ENCODE measurements at regions of chr17 and their contacts with region 1.

Region 1: GRCh38 chr17:36148559-36149295 is 27.7 kb downstream of the TBC1D3B start:
- DNase-seq: peak; percentile 81
- H3K4me3 Mint-ChIP-seq: no peak overlapping the region
- H3K27ac Mint-ChIP-seq: no peak overlapping the region
- H3K4me1 Mint-ChIP-seq: peaks cover 23% of the 10 kb centered on the region
- H3K27me3 Mint-ChIP-seq: peaks cover 40% of the 10 kb centered on the region

Region 2: DNA sequence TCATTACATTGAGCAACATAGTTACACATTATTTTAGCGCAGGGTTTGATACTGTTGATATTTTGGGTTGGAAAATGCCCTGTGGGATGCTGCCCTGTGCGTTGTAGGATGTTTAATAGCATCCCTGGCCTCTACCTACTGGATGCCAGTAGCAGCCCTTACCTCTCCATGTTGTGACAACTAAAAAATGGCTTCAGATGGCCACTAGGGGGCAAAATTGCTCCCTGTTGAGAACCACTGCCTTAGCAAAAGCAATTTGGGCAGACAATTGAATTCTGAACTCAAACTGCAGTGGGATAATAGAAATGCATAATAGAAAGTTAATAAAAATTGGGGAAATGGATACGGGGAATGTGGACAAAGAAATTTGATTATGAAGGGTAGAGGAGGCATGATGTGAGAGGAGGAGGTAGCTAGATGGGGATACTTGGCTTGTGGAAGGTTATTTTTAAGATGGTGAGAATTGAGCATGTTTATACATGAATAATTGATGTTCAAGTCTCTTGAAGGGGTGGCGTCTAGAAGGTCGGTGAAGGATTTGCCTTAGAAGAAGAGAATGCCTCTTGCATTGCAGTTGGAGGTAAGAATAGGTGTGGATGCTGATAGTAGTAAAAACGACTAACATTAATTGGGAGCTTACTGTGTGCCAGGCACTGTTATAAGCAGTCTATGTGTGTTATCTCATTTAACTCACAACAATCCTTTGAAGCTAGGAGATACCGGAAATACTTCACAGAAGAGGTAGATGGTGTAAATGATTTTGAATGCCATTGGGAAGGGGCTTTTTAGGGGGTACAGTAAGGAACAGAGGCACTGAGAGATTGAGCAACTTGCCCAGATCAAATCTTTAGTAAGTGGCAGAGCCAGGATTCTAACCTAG is 299.0 kb before region 1 on chr17:
- CTCF ChIA-PET with region 1: interaction called, 21 read pairs
- POLR2A ChIA-PET with region 1: no interaction called
- DNase-seq: peak; percentile 68
- H3K4me3 Mint-ChIP-seq: no peak overlapping the region
- H3K27ac Mint-ChIP-seq: peak overlapping the region; percentile 44
- H3K4me1 Mint-ChIP-seq: peaks cover 20% of the 10 kb centered on the region
- H3K27me3 Mint-ChIP-seq: no peaks in the 10 kb centered on the region

Region 3: DNA sequence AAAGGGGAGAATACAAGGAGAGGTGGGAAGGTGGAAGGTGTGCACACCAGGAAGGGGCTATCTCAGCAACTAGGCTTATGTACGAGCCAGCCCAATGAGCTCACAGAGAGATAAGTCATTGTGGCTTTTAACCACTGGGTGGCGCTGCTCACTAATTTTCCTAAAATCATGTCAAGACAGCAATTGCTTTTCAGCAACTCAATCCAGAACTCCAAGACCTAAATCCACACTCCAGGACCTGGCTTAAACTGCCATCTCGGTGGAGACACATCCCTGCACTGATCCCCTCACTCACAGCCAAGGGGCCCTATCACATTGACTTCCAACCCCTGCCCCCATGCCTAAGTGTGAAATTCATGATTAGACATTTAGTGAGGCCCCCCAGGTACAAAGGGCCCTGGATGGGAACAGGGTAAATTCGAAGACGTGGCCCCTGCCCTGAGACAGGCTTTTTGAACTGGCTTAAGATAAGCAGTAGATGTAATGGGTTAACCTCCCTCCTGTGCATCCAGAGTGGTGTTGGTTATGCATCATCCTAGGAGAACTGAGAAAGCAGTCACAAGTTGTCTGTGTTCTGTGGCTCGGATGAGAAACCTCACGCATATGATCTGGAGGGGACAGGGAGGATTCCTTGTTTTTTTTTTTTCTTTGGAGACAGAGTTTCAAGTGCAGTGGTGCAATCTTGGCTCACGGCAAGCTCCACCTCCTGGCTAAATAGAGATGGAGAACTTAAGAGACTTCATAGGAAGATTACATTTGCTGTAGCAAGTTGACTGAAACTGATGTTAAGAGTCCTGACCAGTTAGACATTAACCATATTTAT is 179.0 kb before region 1 on chr17:
- CTCF ChIA-PET with region 1: interaction called, 177 read pairs
- POLR2A ChIA-PET with region 1: no interaction called
- DNase-seq: peak; percentile 80
- H3K4me3 Mint-ChIP-seq: no peak overlapping the region
- H3K27ac Mint-ChIP-seq: no peak overlapping the region
- H3K4me1 Mint-ChIP-seq: peaks cover 2% of the 10 kb centered on the region
- H3K27me3 Mint-ChIP-seq: no peaks in the 10 kb centered on the region

Region 4: DNA sequence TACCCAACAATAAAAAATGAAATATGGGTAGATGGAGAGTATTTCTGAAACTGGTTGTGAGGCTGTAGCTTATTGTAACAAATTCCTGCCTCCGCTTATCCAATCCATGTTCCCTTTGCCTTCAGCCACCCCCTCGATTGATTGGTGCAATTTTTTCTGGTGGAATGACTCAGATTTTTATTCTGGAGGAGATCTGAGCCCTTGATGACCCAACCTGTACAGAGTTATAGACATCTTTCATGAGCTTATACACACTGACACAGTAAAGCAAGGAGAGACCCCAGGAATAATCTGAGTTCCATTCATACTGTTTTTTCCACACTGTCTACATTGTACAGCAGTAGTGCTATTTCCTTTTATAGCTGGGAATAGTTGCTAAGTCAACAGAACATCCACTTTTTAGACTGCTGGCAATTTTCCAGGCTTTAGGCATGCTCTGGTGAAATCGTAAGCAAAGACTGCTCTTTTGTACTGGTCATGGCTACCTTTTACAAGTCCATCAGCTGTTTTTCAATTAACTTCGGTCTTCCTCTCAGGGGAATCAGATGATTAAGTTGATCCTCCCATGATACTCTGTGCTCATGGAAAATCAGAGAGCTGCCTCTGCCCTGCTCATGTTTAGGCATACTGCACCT is 15.0 kb before region 1 on chr17:
- CTCF ChIA-PET with region 1: interaction called, 13 read pairs
- POLR2A ChIA-PET with region 1: no interaction called
- DNase-seq: no peak
- H3K4me3 Mint-ChIP-seq: no peak overlapping the region
- H3K27ac Mint-ChIP-seq: no peak overlapping the region
- H3K4me1 Mint-ChIP-seq: no peaks in the 10 kb centered on the region
- H3K27me3 Mint-ChIP-seq: peaks cover 32% of the 10 kb centered on the region

Region 5: GRCh38 chr17:36188891-36189306 is 40.2 kb after region 1 on chr17:
- CTCF ChIA-PET with region 1: no interaction called
- POLR2A ChIA-PET with region 1: no interaction called
- DNase-seq: no peak
- H3K4me3 Mint-ChIP-seq: no peak overlapping the region
- H3K27ac Mint-ChIP-seq: peak overlapping the region; percentile 15
- H3K4me1 Mint-ChIP-seq: peaks cover 29% of the 10 kb centered on the region
- H3K27me3 Mint-ChIP-seq: peaks cover 50% of the 10 kb centered on the region